AG04449 (cell line): ENCODE measurements at regions of chr9 and their contacts with region 1.

Region 1: DNA sequence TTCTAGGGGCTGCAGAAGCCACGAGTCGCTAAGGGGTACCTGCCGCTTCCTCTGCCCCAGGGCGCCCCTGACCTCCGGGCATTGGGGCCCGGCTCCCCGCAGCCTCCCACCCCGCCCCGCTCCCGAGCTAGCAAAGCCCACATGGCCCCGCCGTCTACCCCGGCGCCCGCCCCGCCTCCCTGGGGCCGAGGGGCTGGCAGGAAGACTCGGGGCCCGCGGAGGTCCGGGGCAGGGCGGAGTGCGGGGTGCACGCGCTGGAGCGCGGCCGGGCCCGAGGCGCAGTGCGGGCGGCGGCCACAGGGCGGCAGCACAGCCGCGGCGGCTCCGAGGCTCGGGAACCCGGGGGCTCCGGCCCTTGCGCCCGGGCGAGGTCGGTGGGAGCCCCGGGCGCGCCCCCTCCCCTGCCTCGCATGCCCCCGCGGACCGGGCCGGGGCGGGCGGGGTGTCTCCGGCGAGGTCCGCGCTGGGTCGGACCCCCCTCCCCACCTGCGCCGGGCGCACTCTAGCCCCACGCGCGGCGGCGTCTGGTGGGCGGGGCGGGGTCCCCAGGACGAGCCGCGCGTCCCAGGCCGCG is 6.7 kb downstream of the NRARP start:
- DNase-seq: no peak
- H3K4me3 ChIP-seq: peak overlapping the region; percentile 6; the same call in 1 of the 2 replicates
- CTCF ChIP-seq: peak; percentile 47

Region 2: DNA sequence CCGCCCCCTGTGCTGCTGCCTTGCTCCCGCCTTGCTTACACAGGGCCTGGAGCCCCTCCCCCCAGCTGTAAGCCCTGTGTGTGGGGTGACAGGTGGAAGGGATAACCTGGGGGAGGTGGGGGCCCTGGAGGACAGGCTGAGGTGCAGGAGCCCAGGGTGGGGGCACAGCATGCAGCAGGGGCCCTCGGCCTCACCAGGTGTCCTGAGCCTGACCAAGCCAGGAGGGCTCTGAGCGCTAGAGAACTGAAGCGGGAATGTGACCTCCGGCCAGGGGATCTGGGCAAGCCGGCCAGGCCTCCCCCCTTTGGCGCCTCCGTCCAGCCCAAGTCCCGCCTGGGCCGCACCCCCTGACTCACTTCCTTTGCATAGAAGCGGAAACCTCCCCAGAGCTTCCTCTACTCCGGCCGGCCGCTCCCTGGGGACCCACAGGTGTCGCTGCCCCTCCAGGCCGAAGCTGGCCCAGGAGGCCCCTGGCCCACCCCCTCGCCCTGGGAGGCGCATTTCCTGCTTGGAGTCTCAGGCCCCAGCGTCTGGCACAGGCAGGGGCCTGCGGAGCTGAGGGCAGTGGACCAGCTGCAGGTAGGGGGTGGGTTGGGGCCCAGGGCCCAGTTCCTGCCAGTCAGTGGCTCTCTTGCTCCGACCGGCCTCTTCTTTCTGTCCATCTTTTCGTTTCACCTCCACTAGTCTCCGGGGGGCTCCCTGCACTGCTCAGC is 17.8 kb before region 1 on chr9 and contains the start of gene TOR4A:
- CTCF ChIA-PET with region 1: interaction called, 10 read pairs
- POLR2A ChIA-PET with region 1: no interaction called
- DNase-seq: peak; percentile 26
- H3K4me3 ChIP-seq: peak within 1 kb of the TSS; percentile 63
- CTCF ChIP-seq: no peak

Region 3: GRCh38 chr9:137745541-137745991 is 450.2 kb after region 1 on chr9:
- CTCF ChIA-PET with region 1: no interaction called
- POLR2A ChIA-PET with region 1: no interaction called
- DNase-seq: no peak
- H3K4me3 ChIP-seq: no peak overlapping the region
- CTCF ChIP-seq: no peak